ENCODE measurements at regions of chr11 and their contacts with region 1.

Region 1: DNA sequence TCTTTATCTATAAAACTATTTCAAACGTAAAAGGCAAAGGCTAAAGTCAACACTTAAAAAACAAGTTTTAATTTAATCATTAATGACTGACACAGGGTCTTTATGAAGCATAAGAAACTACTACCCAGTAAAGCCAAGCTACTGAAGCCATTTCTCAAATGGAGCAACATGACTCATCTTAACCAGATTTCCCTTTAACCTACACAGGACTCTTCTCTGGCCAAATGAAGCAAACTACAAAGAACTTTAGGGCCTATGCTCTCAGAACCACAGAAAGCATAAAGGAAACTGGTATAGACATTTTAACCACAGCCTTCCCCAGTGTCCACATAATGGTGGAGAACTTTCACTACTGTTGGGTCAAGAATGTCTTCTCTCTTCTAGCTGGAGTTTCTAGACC is 34.7 kb downstream of the ALG9 start:
- DNase-seq: no peak
- H3K4me3 ChIP-seq: no peak overlapping the region
- H3K27ac ChIP-seq: no peak overlapping the region
- H3K4me1 ChIP-seq: peaks cover 0 to 4% (median 0%) of the 10 kb centered on the region in 3 donors
- H3K27me3 ChIP-seq: no peaks in the 10 kb centered on the region
- CTCF ChIP-seq: no peak
- POLR2A ChIP-seq: no peak

Region 2: DNA sequence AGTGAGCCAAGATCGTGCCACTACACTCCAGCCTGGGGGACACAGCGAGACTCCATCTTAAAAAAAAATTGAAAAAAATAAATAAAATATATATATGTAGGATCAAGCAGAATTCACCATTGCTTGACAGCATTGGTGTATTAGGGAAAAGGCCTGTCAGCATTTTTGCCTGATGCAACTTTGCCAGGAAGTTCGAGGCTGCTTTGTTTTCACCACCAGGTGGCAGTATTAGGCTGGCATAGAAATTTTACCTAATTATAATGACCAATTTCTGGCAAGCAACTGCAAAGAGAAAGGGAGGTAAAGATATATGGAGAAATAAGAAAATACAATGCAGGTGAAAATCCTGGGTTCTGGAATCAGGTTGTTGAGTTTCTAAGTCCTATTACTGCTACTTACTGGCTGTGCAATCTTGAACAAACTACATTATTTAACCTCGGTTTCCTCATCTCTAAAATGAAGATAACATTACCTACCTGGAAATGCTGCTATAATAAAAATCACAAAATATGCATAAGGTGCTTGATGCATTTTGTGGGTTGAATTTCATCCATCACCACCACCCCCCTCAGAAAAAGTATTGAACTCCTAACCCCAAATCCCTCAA is 271.5 kb before region 1 on chr11:
- intact Hi-C with region 1: loop called (anchors 5 kb)
- DNase-seq: no peak
- H3K4me3 ChIP-seq: no peak overlapping the region
- H3K27ac ChIP-seq: no peak overlapping the region
- H3K4me1 ChIP-seq: no peaks in the 10 kb centered on the region
- H3K27me3 ChIP-seq: no peaks in the 10 kb centered on the region
- CTCF ChIP-seq: peak; percentile 61 to 94 (median 88)
- POLR2A ChIP-seq: no peak

Region 3: GRCh38 chr11:111777094-111778046 is 59.4 kb before region 1 on chr11:
- intact Hi-C with region 1: loop called (anchors 10 kb)
- DNase-seq: no peak
- H3K4me3 ChIP-seq: no peak overlapping the region
- H3K27ac ChIP-seq: no peak overlapping the region
- H3K4me1 ChIP-seq: peaks cover 0 to 7% (median 0%) of the 10 kb centered on the region in 3 donors
- H3K27me3 ChIP-seq: no peaks in the 10 kb centered on the region
- CTCF ChIP-seq: peak; percentile 60 to 83 (median 75)
- POLR2A ChIP-seq: no peak

Region 4: DNA sequence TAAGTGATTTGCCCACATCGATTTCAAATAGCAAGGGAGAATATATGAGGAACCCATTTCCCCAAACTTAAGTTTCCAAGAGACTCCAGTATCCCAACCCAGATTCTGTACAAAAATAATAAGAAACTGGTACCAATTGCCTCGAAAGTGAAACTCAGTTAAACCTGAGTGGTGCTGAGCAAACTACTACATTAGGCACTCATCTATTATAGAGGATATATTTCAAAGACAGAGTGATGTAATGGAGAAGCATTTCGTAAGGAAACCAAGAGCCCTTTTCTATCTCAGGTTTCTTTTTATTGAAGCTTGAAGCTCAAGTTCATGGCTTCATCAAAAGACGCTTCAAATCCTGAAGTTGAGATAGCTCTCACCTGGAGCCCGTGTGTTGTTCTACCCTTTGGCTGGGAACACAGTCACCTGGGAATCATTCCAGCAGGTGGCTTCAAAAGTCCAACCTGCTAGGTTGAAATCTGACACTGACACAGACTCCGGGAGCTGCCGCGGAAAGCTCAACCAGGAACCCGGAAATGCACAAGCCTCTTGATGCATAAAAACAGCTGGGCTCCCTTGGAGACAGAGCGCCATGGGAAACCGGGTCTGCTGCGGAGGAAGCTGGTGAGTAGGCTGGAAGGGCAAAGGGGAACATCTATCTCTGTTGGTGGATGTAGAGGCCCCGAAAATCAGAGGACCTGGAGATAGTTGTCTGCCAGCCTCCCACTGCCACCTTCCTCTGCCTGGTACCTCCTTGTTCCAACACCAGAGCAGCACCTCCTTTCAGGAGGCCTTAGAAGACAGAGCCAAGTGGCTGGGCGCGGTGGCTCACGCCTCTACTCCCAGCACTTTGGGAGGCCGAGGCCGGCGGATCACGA is 81.9 kb after region 1 on chr11 and contains the start of gene C11orf52:
- intact Hi-C with region 1: no loop called
- DNase-seq: no peak
- H3K4me3 ChIP-seq: peak within 1 kb of the TSS in 3 of 4 donors; percentile 29 to 53 (median 32)
- H3K27ac ChIP-seq: peak within 1 kb of the TSS; percentile 75 to 85 (median 80)
- H3K4me1 ChIP-seq: peaks cover 14 to 46% (median 17%) of the 10 kb centered on the region in 3 donors
- H3K27me3 ChIP-seq: no peaks in the 10 kb centered on the region
- CTCF ChIP-seq: peak in 1 of 6 experiments; percentile 9
- POLR2A ChIP-seq: no peak
- total RNA-seq, gene C11orf52: 2.4 to 10.2 (median 3.7) TPM